ENCODE measurements at regions of chr6 and their contacts with region 1.

Region 1: DNA sequence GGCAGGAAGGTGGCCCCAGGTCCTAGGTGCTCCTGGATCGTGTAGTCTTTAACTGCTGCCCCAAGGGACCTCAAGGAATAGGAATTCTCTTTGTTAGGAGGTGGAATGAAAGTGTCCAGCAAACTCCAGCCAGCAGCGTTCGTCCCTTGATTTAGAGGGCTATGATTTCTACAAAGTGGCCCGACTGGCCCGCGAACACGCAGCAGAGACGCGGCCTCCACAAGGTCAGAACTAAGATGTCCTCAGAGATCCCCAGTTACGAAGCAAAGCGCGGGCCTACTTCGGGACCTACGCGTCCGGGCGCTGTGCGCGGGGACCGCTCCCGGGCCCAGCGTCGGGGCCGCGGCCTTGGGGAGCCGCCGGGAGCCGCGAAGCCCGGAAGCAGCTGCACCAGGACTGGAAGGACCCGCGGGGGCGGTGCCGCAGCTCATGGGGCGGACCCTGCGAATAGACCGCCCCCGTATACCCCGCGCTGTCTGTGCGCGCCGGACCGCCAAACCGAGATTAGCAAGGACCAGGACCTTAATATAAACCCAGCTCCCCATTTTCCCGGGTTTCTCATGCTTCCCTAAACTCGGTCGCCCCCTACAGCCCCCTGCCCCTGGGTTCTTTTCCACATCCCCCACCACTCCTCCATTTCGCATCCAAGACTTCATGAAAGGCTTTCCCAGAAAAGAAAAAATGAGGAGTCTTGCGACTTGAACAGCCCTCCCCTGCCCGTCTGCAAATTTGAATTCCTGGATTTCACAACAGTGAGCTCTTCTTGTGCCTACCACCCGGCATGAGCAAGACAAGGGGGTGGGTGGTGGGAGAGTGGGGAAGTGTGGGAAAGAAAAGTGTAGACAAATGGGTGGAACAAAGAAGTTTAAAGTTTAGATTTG is at the start of gene C6orf47:
- DNase-seq: peak; percentile 74
- H3K4me3 Mint-ChIP-seq: peak within 1 kb of the TSS; percentile 89
- H3K27ac Mint-ChIP-seq: peak within 1 kb of the TSS; percentile 64
- H3K4me1 Mint-ChIP-seq: peaks cover 52% of the 10 kb centered on the region
- H3K27me3 Mint-ChIP-seq: no peaks in the 10 kb centered on the region
- CTCF ChIP-seq: no peak
- total RNA-seq, gene C6orf47: 15.5 and 16.6 TPM in 2 replicates

Region 2: GRCh38 chr6:29872791-29873190 is 1787.8 kb before region 1 on chr6:
- CTCF ChIA-PET with region 1: no interaction called
- POLR2A ChIA-PET with region 1: no interaction called
- intact Hi-C with region 1: no loop called
- DNase-seq: no peak
- H3K4me3 Mint-ChIP-seq: no peak overlapping the region
- H3K27ac Mint-ChIP-seq: no peak overlapping the region
- H3K4me1 Mint-ChIP-seq: no peaks in the 10 kb centered on the region
- H3K27me3 Mint-ChIP-seq: peaks cover 23% of the 10 kb centered on the region
- CTCF ChIP-seq: no peak

Region 3: GRCh38 chr6:31546962-31547726 is 113.5 kb before region 1 on chr6 and contains the start of gene NFKBIL1:
- CTCF ChIA-PET with region 1: interaction called, 5 read pairs
- POLR2A ChIA-PET with region 1: interaction called, 21 read pairs
- intact Hi-C with region 1: no loop called
- DNase-seq: peak; percentile 96
- H3K4me3 Mint-ChIP-seq: peak within 1 kb of the TSS; percentile 75
- H3K27ac Mint-ChIP-seq: peak within 1 kb of the TSS; percentile 57
- H3K4me1 Mint-ChIP-seq: peaks cover 18% of the 10 kb centered on the region
- H3K27me3 Mint-ChIP-seq: no peaks in the 10 kb centered on the region
- CTCF ChIP-seq: no peak
- total RNA-seq, gene NFKBIL1: 25.2 and 30.3 TPM in 2 replicates

Region 4: GRCh38 chr6:31619805-31620585 is 40.6 kb before region 1 on chr6:
- CTCF ChIA-PET with region 1: no interaction called
- POLR2A ChIA-PET with region 1: interaction called, 24 read pairs
- intact Hi-C with region 1: loop called (anchors 5 kb)
- DNase-seq: peak; percentile 99
- H3K4me3 Mint-ChIP-seq: peak overlapping the region; percentile 76
- H3K27ac Mint-ChIP-seq: peak overlapping the region; percentile 89
- H3K4me1 Mint-ChIP-seq: peaks cover 17% of the 10 kb centered on the region
- H3K27me3 Mint-ChIP-seq: no peaks in the 10 kb centered on the region
- CTCF ChIP-seq: no peak

Region 5: GRCh38 chr6:31815025-31815838 is 154.6 kb after region 1 on chr6 and contains the starts of genes HSPA1A and HSPA1L:
- CTCF ChIA-PET with region 1: no interaction called
- POLR2A ChIA-PET with region 1: interaction called, 20 read pairs
- intact Hi-C with region 1: no loop called
- DNase-seq: peak; percentile 99
- H3K4me3 Mint-ChIP-seq: peak within 1 kb of the TSS; percentile 89
- H3K27ac Mint-ChIP-seq: peak within 1 kb of the TSS; percentile 97
- H3K4me1 Mint-ChIP-seq: peaks cover 11% of the 10 kb centered on the region
- H3K27me3 Mint-ChIP-seq: no peaks in the 10 kb centered on the region
- CTCF ChIP-seq: no peak
- total RNA-seq, gene HSPA1A: 20.3 and 34.0 TPM in 2 replicates
- total RNA-seq, gene HSPA1L: 0.35 and 0.79 TPM in 2 replicates